PC-3 (cell line): ENCODE measurements at regions of chr14 and their contacts with region 1.

Region 1: DNA sequence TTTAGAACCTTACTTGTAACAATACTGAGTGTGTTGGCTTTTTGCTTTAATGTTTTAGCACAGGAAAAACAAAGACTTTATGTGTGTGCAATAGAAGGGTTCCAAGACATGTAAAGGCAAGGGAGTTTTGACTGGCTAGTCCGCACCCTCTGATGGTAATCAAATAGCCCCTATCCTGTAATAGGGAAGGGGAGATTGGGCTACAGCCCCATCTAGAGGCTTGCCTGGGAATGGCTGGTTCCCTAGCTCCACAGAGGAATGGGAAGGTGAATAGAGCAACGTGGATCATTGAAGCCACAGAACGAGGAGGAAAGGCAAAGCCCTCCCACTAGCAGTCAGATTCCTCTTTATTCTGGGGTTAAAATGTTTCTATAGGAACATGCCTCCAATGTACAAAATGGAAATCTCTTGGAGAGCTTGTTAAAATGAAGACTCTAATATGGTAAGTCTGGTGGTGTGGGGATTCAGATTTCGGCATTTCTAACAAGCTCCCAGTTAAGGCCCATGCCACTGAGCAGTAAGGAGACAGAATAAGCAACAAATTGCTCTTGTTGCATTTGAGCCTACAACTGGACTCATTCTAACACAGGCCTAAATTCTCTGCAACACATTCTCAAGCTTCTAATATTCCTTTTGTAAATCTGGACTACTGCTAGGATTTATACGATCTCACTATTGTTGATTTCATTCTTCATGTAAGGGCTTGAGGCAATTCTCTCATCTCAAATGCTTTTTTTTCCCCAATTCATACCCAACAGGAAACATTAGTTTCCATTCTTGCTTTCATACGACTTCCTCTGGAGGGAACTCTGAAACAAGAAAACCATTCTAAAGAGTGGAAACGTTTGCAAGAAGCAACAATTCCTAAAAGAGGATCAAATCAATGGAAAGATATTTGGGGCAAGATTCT is 57.1 kb downstream of the NIN start:
- DNase-seq: peak; percentile 91
- ATAC-seq: peak; percentile 58
- H3K4me3 ChIP-seq: no peak overlapping the region
- H3K27ac ChIP-seq: 0 out of 2 replicates have a peak overlapping the region, but pooled peaks have one; percentile 83
- H3K4me1 ChIP-seq: peaks cover 55% of the 10 kb centered on the region
- H3K27me3 ChIP-seq: no peaks in the 10 kb centered on the region
- CTCF ChIP-seq: peak; percentile 99

Region 2: GRCh38 chr14:50447461-50447860 is 326.4 kb before region 1 on chr14:
- CTCF ChIA-PET with region 1: no interaction called
- POLR2A ChIA-PET with region 1: no interaction called
- intact Hi-C with region 1: loop called (anchors 10 kb)
- DNase-seq: peak; percentile 93
- ATAC-seq: peak; percentile 75
- H3K4me3 ChIP-seq: no peak overlapping the region
- H3K27ac ChIP-seq: peak overlapping the region; percentile 50
- H3K4me1 ChIP-seq: peaks cover 31% of the 10 kb centered on the region
- H3K27me3 ChIP-seq: no peaks in the 10 kb centered on the region
- CTCF ChIP-seq: no peak

Region 3: GRCh38 chr14:50599700-50600444 is 174.0 kb before region 1 on chr14:
- CTCF ChIA-PET with region 1: interaction called, 30 read pairs
- POLR2A ChIA-PET with region 1: no interaction called
- intact Hi-C with region 1: loop called (anchors 1 kb)
- DNase-seq: peak; percentile 86
- ATAC-seq: peak; percentile 66
- H3K4me3 ChIP-seq: peak overlapping the region; percentile 30; the same call in 1 of the 2 replicates
- H3K27ac ChIP-seq: peak overlapping the region; percentile 44
- H3K4me1 ChIP-seq: peaks cover 32% of the 10 kb centered on the region
- H3K27me3 ChIP-seq: no peaks in the 10 kb centered on the region
- CTCF ChIP-seq: peak; percentile 92

Region 4: DNA sequence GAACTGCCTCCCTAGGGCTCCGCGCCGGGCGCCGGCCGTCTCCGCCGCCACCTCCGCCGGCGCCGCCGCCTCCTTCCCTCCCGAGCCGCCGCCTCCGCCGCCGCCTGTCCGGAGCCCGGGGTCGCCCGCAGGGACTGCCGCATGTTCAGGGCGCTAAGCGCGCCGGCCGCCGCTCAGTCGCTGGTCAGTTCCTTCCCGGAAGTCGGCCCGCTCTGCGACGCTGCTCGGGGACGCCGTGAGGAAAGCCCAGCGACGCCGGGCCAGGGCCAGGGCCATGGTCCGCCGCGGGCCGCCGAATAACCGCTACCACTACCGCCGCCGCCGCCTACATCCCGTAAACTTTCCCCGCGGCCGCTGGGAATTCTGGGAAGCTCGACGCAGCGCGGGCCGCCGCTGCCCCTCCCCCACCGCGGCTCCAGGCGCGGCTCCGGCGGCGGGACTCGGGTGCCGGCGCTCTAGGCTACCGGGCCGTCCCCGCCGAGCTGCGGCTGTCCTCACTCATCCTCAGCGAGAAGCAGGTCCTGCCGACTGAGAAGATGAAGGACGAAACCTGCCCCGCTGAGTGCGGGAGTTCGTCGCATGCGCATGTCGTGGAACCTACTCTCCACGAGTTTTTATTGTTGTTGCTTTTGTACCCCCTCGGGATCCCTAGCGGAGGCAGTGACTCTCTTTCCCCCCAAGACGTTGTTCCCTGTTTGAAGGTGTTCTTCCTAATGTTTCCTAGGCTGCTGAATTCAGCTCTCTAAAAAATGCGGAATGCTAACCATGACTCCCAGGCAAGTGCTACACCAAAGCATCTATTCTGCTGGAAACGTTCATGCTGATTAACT is 105.7 kb before region 1 on chr14 and contains the start of gene SAV1:
- CTCF ChIA-PET with region 1: interaction called, 22 read pairs
- POLR2A ChIA-PET with region 1: interaction called, 31 read pairs
- intact Hi-C with region 1: loop called (anchors 2 kb)
- DNase-seq: peak; percentile 88
- ATAC-seq: peak; percentile 77
- H3K4me3 ChIP-seq: peak within 1 kb of the TSS; percentile 95
- H3K27ac ChIP-seq: peak within 1 kb of the TSS; percentile 75
- H3K4me1 ChIP-seq: peaks cover 21% of the 10 kb centered on the region
- H3K27me3 ChIP-seq: no peaks in the 10 kb centered on the region
- CTCF ChIP-seq: no peak
- total RNA-seq, gene SAV1: 66.2 and 87.1 TPM in 2 replicates

Region 5: GRCh38 chr14:50714450-50715073 is 59.3 kb before region 1 on chr14:
- CTCF ChIA-PET with region 1: interaction called, 13 read pairs
- POLR2A ChIA-PET with region 1: no interaction called
- intact Hi-C with region 1: loop called (anchors 1 kb)
- DNase-seq: peak; percentile 67
- ATAC-seq: peak; percentile 93
- H3K4me3 ChIP-seq: no peak overlapping the region
- H3K27ac ChIP-seq: no peak overlapping the region
- H3K4me1 ChIP-seq: no peaks in the 10 kb centered on the region
- H3K27me3 ChIP-seq: no peaks in the 10 kb centered on the region
- CTCF ChIP-seq: peak; percentile 79

Region 6: DNA sequence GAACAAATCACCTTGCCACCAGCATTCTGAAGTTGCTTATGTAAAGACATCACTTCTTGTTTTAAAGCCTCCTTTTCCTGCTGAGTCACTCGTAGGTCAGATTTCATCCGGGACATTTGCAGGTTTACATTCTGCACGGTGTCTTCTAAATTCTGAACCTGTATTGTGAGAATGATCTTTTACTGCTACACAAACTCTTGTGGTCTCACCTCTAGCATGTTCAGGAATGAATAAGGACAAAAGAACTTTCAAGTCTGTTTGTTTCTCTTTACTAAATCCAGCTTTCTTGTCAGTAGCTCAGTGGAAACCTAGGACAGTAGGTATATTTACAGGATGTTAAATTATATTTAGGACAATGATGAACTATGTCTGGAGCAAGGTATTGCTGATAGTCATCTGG is 32.3 kb before region 1 on chr14:
- CTCF ChIA-PET with region 1: interaction called, 5 read pairs
- POLR2A ChIA-PET with region 1: interaction called, 4 read pairs
- intact Hi-C with region 1: loop called (anchors 1 kb)
- DNase-seq: peak; percentile 95
- ATAC-seq: peak; percentile 93
- H3K4me3 ChIP-seq: peak overlapping the region; percentile 6; the same call in 1 of the 2 replicates
- H3K27ac ChIP-seq: peak overlapping the region; percentile 83
- H3K4me1 ChIP-seq: peaks cover 18% of the 10 kb centered on the region
- H3K27me3 ChIP-seq: no peaks in the 10 kb centered on the region
- CTCF ChIP-seq: no peak

Region 7: DNA sequence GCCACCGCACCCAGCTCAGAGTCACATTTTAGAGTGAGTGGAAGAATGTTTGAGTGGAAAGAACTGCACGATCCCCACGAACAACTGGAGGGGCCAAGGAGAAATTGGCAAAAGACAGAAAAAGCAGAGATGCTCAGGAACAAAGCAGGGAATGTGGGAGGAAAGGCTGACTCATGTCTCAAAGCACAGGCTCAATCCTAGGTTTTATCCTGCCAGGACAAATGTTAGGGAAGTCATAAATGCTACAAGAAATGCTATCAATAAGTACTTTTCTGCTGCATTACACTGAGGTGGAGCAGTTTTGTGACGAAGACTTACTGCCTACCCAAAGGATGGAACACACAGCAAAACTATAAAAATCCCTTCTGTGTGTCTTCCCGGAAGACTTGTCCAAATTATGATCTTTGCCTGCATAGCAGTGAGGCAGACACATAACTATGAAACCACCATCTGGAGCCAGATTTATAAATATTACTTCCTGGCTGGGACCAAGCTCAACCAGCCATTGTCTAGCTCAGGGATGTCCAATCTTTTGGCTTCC is 30.4 kb after region 1 on chr14:
- CTCF ChIA-PET with region 1: interaction called, 3 read pairs
- POLR2A ChIA-PET with region 1: no interaction called
- intact Hi-C with region 1: loop called (anchors 2 kb)
- DNase-seq: no peak
- ATAC-seq: no peak; the same call in 1 of the 2 replicates
- H3K4me3 ChIP-seq: no peak overlapping the region
- H3K27ac ChIP-seq: no peak overlapping the region
- H3K4me1 ChIP-seq: peaks cover 31% of the 10 kb centered on the region
- H3K27me3 ChIP-seq: no peaks in the 10 kb centered on the region
- CTCF ChIP-seq: no peak